ENCODE measurements at regions of chr6 and their contacts with region 1.

Region 1: GRCh38 chr6:155050311-155050710 is 55.2 kb downstream of the TIAM2 start:
- DNase-seq: no peak
- H3K4me3 ChIP-seq: no peak overlapping the region
- H3K27ac ChIP-seq: no peak overlapping the region
- H3K4me1 ChIP-seq: no peaks in the 10 kb centered on the region
- H3K27me3 ChIP-seq: no peaks in the 10 kb centered on the region
- CTCF ChIP-seq: no peak
- POLR2A ChIP-seq: no peak

Region 2: GRCh38 chr6:155075930-155076695 is 25.8 kb after region 1 on chr6:
- intact Hi-C with region 1: loop called (anchors 1 kb)
- DNase-seq: no peak
- H3K4me3 ChIP-seq: no peak overlapping the region
- H3K27ac ChIP-seq: no peak overlapping the region
- H3K4me1 ChIP-seq: no peaks in the 10 kb centered on the region
- H3K27me3 ChIP-seq: no peaks in the 10 kb centered on the region
- CTCF ChIP-seq: no peak
- POLR2A ChIP-seq: no peak

Region 3: GRCh38 chr6:155693573-155694421 is 643.5 kb after region 1 on chr6:
- intact Hi-C with region 1: no loop called
- DNase-seq: no peak
- H3K4me3 ChIP-seq: no peak overlapping the region
- H3K27ac ChIP-seq: no peak overlapping the region
- H3K4me1 ChIP-seq: no peaks in the 10 kb centered on the region
- H3K27me3 ChIP-seq: no peaks in the 10 kb centered on the region
- CTCF ChIP-seq: no peak
- POLR2A ChIP-seq: no peak